ENCODE measurements at regions of chr20 and their contacts with region 1.

Region 1: DNA sequence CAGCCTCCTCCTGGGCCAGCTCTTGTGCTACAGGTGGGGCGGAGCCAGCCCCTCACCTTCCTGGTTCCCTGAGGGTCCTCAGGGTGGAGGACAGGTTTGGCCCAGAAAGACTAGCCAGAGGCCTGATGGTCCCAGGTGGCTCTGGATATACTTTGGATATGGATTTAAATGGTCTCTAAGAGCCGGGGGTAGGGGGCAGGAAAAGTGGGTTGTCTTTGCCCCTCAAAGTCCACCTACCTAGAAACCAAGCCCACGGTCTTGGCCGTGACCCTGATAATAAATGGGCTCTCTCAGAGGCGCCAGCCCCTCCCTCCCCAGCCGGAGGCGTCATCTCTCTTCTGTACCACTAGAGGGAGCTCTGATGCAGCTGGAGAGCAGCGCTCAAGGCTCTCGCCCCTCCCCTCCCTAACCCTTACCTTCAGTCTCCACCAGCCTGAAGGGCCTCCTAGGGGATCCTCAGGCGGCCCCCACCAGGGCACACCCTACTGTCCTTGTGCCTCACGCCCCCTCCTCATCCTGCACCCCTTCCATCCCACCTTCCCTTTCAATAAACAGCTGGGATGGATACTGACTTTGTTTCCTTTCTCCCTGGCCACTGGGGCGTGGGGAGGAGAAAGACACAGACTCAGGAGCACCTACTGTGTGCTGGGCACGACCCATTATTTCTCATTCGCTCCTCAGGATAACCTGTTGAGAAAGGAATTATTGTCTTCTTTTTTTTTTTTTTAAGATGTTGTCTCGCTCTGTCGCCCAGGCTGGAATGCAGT is 7.6 kb downstream of the NRSN2 start:
- DNase-seq: peak; percentile 81
- ATAC-seq: peak; percentile 95

Region 2: DNA sequence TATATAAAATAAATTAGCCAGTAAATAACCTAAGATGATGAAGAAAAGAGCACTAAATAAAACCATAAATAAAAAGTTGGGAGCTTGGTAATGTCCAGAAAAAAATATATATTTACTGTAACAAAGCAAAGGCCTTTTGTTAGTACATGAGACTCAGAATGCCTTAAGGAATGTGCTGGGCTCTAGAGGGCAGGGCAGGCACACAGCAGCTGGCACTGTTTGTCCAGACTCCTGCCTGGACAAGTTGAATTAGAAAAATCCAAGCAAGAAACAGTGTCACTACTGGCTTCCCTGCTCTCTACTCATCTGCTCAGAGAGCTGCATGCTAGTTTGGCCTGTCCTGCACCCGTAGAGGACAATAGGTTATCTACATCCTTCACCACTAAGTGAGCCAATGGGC is 118.6 kb before region 1 on chr20:
- intact Hi-C with region 1: no loop called
- DNase-seq: peak; percentile 42
- ATAC-seq: peak; percentile 68

Region 3: GRCh38 chr20:462199-462991 is 107.9 kb after region 1 on chr20 and contains the start of gene TBC1D20:
- intact Hi-C with region 1: no loop called
- DNase-seq: peak; percentile 90
- ATAC-seq: peak; percentile 97
- total RNA-seq, gene TBC1D20: 23.1 TPM

Region 4: DNA sequence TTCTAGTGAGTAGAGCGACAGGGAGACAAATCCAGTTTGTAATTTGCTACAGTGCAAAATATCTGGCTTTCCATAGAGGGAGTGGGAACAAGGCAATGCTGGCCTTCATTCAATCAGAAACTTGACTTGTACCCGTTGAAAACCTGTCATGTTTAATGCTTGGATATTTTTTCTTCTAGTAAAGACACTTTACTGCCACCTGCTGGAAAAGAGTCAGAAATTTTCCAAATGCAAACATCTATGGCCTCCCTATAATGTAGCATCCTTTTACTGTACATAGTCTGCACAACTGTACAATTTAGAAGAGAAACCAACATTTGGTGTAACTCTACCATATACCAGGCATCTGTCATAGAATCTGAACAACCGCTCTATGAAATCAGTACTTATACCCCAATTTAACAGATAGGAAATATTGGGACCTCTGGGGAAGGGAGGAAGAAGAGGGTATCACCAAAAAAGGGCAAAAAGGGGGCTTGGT is 124.5 kb after region 1 on chr20:
- intact Hi-C with region 1: loop called (anchors 2 kb)
- DNase-seq: no peak
- ATAC-seq: peak; percentile 49

Region 5: GRCh38 chr20:561437-562231 is 207.2 kb after region 1 on chr20:
- intact Hi-C with region 1: no loop called
- DNase-seq: peak; percentile 52
- ATAC-seq: peak; percentile 92

Region 6: DNA sequence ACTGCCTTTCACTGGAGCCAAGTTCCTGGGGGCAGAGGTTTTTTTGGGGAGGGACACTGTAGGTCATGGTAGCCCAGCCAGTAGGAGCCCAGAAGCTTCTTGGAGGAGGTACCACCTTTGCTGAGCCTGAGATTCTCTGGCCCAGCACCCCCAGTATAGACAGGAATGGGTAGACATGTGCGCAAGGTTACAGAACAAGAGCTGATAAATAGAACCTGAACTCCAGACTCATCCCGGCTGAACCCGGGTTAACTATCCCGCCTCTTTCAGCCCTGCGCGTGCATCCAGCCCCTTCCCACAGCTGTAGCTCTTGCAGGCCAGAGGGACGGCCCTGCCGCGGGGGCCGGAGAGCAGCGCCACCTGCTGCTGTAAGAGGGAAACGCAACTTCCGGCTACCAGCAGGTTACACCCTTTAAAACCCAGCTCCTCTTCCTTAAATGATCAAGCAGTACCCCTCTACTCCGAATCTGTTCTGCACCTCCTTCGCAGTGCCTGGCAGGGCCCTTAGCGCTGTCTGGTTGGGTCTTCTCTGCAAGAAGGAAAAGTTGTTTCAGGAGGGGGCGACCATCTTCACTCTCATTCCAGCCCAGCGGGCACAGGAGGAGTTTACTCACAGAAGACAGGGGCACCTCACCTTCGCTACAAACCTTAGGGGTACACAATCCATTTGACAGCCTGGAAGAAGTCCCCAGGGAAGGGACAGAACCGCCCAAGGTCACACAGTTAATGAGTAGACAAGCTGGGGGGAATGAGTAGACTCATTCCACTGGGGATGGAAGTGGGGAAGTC is 291.0 kb after region 1 on chr20:
- intact Hi-C with region 1: loop called (anchors 10 kb)
- DNase-seq: peak; percentile 83
- ATAC-seq: peak; percentile 88

Region 7: GRCh38 chr20:740141-740540 is 385.7 kb after region 1 on chr20:
- intact Hi-C with region 1: loop called (anchors 5 kb)
- DNase-seq: no peak
- ATAC-seq: no peak

Measured in Right ventricle myocardium superior (tissue), 1 donor.